Motor neuron (in vitro differentiated cells): ENCODE measurements at regions of chr1 and their contacts with region 1.

Region 1: DNA sequence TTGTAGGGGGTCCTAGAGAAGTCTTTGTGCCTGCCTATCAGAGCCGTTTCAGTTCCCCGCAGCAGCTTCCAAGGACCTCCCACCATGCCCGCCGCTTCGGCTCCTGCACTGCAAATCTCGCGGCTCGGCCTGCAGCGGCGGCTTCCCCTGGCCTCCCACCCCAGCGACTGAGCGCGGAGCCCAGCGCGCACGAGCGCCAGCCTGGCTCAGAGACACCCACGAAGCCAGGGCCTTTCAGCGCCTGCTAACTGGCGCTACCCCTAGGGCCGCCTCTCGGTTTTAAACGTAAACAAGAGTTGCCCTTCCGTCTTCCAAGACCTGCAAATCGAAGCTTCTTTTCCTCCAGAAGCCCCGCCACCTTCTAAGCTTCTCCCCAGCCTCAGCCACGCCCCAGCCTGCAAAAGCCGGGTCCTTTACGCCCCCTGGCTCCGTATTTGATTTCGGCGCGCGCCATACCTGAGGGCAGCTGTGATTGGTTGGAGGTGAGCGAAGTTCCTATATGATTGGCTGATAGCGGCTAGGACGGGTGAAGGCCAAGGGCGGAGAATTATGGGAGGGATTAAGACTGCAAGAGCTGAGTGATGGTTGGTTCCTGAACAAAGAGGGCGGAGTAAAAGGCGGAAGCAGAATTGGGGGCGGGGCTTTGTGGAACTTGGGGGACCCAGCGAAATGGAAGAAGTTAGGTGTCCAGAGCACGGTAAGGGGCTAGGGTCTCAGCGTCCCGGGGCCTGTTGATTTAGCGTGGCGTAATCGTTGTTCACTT is at the start of gene TTF2:
- ATAC-seq: peak; percentile 95 to 99 (median 99)
- H3K4me3 ChIP-seq: peak within 1 kb of the TSS; percentile 49 to 67 (median 66)
- H3K27ac ChIP-seq: no peak within 1 kb of the TSS
- H3K4me1 ChIP-seq: peaks cover 3 to 4% of the 10 kb centered on the region in 2 donors
- total RNA-seq, gene TTF2: 5.4 to 48.7 (median 10.6) TPM

Region 2: DNA sequence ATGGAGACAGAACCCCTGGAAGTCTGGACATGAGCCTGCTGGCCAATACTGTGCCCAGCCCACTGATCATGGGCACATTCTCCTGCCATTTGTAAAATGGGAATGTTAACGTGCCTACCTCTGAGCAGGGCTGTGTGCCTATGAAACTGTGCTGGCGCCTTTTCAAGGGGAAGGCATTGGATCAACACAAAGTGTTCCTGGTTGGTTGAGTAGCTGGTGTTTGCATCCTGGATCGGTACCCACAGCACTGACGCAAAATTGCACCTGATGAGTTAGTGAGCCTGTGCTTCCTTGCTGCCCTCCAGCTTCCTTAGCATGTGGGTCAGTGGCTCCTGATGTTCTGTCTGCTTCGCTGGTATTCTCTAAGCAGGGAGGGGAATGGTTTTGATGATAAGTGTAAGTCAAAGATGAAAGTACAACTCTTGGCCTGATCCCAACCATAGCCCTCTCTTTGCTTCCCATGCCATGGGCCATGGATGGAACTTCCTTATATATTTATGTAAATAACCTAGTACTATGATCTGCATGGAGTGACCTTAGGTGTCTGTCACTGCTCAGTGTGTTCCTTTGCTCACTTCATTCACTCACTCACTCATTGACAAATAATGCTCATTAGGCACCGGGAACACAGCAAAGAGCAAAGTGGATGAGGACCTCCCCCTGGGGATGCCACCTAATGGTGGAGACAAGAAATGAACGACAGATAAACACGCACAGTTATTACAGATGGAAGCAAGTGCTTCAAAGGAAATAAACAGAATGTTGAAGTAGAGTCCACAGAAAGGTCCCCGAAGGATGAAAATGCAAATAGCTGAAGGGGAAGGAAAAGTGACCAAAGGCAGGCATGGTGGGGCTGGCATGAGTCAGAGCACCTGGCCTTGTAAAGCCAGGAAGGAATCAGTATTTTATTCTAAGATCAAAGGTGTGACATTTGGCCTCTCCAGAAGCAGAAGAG is 925.9 kb before region 1 on chr1:
- in situ Hi-C with region 1: loop called in 1 of 9 experiments (anchors 25 kb)
- ATAC-seq: no peak
- H3K4me3 ChIP-seq: no peak overlapping the region
- H3K27ac ChIP-seq: no peak overlapping the region
- H3K4me1 ChIP-seq: no peaks in the 10 kb centered on the region

Region 3: DNA sequence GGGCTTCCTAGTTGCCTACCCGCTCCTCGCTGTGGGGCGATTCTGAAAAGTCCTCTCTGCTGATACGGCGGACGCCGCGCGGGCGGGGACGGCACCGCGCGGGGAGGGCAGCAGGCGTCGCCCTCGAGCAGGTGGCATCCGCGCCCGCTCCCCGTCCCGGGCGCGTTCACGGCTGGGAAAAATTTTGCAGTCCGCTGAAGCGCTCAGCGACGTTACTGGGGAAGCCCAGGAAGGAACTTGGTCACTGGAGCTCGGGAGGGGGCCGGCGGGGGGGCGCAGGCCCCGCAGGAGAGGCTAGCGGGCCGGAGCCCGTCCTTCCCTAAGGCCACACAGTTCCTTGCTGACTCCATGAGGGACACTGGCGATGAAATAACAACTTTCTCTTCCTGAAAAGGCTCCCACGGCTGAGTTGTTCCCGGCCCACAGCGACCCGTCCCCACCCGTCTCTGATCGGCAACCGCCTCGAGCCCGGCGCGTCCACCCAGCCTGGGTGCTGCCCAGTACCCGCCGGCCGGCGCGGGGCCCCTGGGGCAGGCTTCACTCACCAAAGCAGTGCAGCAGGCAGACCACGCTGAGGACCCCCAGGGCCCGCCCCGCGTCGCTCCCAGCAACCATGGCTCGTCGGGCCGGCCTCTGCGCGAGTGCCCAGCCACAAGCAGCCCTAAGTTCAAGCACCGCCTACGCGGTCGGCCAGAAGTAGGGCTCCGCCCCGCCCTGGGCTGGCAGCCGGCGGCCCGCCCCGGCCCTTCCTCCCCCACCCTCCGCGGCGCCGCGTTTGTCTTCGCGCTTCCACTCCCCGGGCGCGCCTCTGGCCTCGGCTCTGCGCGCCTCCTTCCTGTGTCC is 489.3 kb before region 1 on chr1 and contains the start of gene CD58:
- in situ Hi-C with region 1: loop called in 5 of 9 experiments (anchors 10 to 25 kb)
- ATAC-seq: peak; percentile 69 to 88 (median 86)
- H3K4me3 ChIP-seq: peak within 1 kb of the TSS; percentile 40 to 56 (median 45)
- H3K27ac ChIP-seq: peak within 1 kb of the TSS; percentile 0 to 45
- H3K4me1 ChIP-seq: peaks cover 7 to 16% of the 10 kb centered on the region in 2 donors
- total RNA-seq, gene CD58: 2.5 to 64.5 (median 12.8) TPM

Region 4: GRCh38 chr1:116737020-116737854 is 322.6 kb before region 1 on chr1:
- in situ Hi-C with region 1: loop called in 5 of 9 experiments (anchors 10 to 25 kb)
- ATAC-seq: peak; percentile 56 to 90 (median 81)
- H3K4me3 ChIP-seq: no peak overlapping the region
- H3K27ac ChIP-seq: no peak overlapping the region
- H3K4me1 ChIP-seq: peaks cover 8 to 9% of the 10 kb centered on the region in 2 donors

Region 5: DNA sequence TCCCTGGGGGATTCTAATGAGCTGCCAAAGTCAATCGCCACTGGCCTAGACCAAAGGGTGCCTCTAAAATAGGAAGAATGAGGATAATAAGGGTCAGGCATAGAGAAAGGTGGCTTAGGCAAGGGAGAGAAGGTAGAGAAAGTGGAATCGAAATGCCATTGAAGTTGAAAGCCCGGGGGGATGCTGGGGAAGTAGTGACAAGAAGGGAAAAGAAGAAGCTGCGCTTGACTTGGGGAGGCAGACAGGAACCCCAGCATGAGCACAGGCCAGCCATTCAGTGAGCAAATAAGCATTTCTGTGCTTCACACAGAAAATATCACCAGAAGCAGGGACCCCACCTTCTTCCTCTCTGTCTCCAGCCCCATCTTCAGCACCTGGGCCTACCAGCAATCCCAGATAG is 304.2 kb before region 1 on chr1:
- in situ Hi-C with region 1: no loop called
- ATAC-seq: no peak
- H3K4me3 ChIP-seq: no peak overlapping the region
- H3K27ac ChIP-seq: no peak overlapping the region
- H3K4me1 ChIP-seq: no peaks in the 10 kb centered on the region

Region 6: GRCh38 chr1:117231748-117232373 is 172.0 kb after region 1 on chr1:
- in situ Hi-C with region 1: no loop called
- ATAC-seq: peak in 7 of 8 experiments; percentile 13 to 98 (median 87)
- H3K4me3 ChIP-seq: no peak overlapping the region
- H3K27ac ChIP-seq: no peak overlapping the region
- H3K4me1 ChIP-seq: peaks cover 15 to 19% of the 10 kb centered on the region in 2 donors

Region 7: GRCh38 chr1:117284399-117285215 is 224.7 kb after region 1 on chr1:
- in situ Hi-C with region 1: loop called in 2 of 9 experiments (anchors 10 kb)
- ATAC-seq: peak; percentile 77 to 94 (median 91)
- H3K4me3 ChIP-seq: no peak overlapping the region
- H3K27ac ChIP-seq: no peak overlapping the region
- H3K4me1 ChIP-seq: peaks cover 7 to 11% of the 10 kb centered on the region in 2 donors

Region 8: GRCh38 chr1:117555806-117556205 is 495.9 kb after region 1 on chr1:
- in situ Hi-C with region 1: no loop called
- ATAC-seq: peak in 1 of 8 experiments; percentile 44
- H3K4me3 ChIP-seq: no peak overlapping the region
- H3K27ac ChIP-seq: no peak overlapping the region
- H3K4me1 ChIP-seq: no peaks in the 10 kb centered on the region

Region 9: GRCh38 chr1:117919376-117919775 is 859.5 kb after region 1 on chr1:
- in situ Hi-C with region 1: loop called in 1 of 9 experiments (anchors 25 kb)
- ATAC-seq: peak in 2 of 8 experiments; percentile 25 to 43
- H3K4me3 ChIP-seq: no peak overlapping the region
- H3K27ac ChIP-seq: no peak overlapping the region
- H3K4me1 ChIP-seq: no peaks in the 10 kb centered on the region